ENCODE measurements at regions of chr5 and their contacts with region 1.

Region 1: DNA sequence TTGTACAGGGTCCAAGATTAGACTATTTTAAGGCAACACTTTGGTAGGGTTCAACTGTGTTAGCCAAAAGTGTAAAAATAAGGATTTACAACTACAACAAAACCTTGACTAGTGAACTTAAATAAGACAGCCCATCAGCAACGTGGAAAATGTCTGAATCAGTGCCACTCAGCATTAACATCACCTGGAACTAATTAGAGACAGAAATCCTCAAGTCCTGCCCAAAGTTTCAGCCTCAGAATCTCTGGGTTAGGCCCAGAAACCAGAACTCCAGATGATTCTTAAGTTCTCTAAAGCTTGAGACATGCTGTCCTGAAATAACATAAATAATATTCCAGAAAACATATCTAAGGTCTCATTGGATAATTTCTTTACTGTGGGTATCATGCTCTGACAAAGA is 118.6 kb downstream of the SEMA6A start:
- DNase-seq: no peak
- ATAC-seq: no peak
- H3K4me3 ChIP-seq: no peak overlapping the region
- H3K27ac ChIP-seq: no peak overlapping the region
- H3K4me1 ChIP-seq: no peaks in the 10 kb centered on the region
- H3K27me3 ChIP-seq: no peaks in the 10 kb centered on the region
- CTCF ChIP-seq: no peak

Region 2: DNA sequence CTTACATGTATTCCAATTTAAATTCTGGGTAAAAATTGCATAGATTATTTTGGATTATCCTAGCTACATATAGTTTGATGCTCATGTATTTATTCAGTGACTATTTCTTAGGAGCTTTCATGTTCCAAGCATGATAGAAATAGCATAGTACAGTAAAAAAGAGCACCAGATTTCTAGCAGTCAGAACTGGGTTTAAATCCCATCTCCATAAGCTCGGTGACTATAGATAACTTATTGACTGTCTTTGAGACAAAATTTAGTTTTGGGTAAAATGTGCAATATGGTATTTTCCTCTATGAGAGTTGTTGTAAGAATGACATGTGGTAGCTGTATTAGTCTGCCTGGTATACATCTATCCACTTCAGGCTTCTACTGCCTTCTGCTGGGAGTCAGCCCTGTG is 1642.7 kb after region 1 on chr5:
- CTCF ChIA-PET with region 1: interaction called, 10 read pairs
- POLR2A ChIA-PET with region 1: no interaction called
- in situ Hi-C with region 1: no loop called
- intact Hi-C with region 1: no loop called
- DNase-seq: no peak
- ATAC-seq: no peak
- H3K4me3 ChIP-seq: no peak overlapping the region
- H3K27ac ChIP-seq: no peak overlapping the region
- H3K4me1 ChIP-seq: no peaks in the 10 kb centered on the region
- H3K27me3 ChIP-seq: no peaks in the 10 kb centered on the region
- CTCF ChIP-seq: no peak